GM18951 (cell line): ENCODE measurements at regions of chr16 and their contacts with region 1.

Region 1: GRCh38 chr16:85610508-85611332 is 2.4 kb upstream of the GSE1 start:
- POLR2A ChIP-seq: no peak

Region 2: DNA sequence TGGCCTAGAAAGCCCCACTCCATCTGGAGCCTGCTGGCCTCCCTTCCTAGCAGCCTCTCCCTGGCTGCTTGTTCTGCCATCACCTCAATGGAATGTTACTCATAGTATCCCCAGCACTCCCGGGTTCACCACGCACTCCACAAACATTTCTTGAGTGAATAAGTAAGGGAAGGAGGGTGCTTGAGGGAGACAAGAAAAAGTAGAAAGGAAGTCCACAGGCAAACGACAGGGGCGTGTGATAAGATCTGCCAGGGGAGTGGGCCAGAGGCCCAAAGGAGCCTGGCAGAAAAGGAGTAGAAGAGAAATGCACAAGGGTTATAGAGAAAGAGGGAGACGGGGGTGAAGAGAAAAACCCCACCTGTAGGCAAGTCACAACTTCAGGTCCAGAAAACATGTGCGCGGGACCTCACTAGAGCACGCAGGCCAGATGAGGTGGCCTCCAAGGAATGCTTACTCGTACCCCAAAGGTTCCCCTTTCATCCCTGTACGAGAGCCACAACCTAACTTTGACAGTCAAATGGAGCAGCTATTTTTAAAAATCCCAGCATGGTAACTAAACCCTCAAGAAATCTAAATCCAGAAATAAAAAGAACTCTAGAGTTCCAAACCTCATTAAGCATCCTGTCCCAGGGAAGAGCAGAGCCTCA is 606.0 kb before region 1 on chr16:
- in situ Hi-C with region 1: no loop called
- POLR2A ChIP-seq: no peak

Region 3: DNA sequence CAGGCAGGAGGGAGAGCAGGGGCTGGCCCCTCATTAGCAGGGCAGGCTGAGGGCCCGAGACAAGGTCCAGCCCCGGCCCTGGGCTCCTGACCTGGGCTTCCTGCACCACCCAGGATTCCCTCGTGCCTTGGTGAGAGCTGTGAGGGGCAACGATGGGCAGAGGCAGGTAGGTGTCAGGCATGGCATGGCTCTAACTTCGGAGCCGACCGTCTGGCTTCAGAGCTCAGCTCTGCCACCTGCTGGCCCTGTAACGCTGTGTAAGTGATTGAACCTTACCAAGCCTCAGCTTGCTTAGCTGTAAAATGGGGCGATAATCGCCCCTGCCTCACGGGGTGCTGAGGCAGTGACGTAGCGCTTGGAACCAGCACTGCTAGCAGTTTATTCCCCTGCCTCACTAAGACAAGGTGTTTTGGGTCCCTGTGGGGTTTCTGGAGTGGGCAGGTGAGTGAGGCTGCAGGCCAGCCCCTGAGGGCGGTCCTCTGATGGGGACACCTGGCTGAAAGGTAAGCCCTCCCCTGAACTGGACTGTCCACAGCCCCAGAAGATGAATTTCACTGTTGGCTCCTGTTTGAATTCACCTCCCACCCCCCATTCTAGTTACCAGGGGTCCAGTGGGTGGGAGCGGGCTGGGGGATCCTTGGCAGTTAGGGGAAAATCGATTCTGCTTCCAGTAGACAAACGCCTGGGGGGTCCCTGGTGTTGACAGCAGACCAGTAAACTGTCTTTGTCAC is 182.4 kb before region 1 on chr16:
- in situ Hi-C with region 1: loop called (anchors 25 kb)
- POLR2A ChIP-seq: no peak